Activated CD4-positive, alpha-beta T cell treated with anti-CD3 and anti-CD28 coated beads for 36 hours (primary cell): ENCODE measurements at regions of chr4 and their contacts with region 1.

Region 1: GRCh38 chr4:2008875-2009703 is at the start of gene NELFA:
- DNase-seq: peak; percentile 97
- ATAC-seq: peak; percentile 81
- H3K4me3 Mint-ChIP-seq: peak within 1 kb of the TSS; percentile 87
- H3K27ac Mint-ChIP-seq: peak within 1 kb of the TSS; percentile 90
- H3K4me1 Mint-ChIP-seq: peaks cover 34% of the 10 kb centered on the region
- H3K27me3 Mint-ChIP-seq: no peaks in the 10 kb centered on the region
- total RNA-seq, gene NELFA: 41.6 to 48.3 TPM

Region 2: GRCh38 chr4:1683736-1684505 is 325.2 kb before region 1 on chr4 and contains the start of gene FAM53A:
- CTCF ChIA-PET with region 1: no interaction called
- POLR2A ChIA-PET with region 1: no interaction called
- intact Hi-C with region 1: loop called in 1 of 2 experiments (anchors 1 kb)
- DNase-seq: no peak
- ATAC-seq: peak; percentile 96
- H3K4me3 Mint-ChIP-seq: peak within 1 kb of the TSS; percentile 69
- H3K27ac Mint-ChIP-seq: peak within 1 kb of the TSS; percentile 69
- H3K4me1 Mint-ChIP-seq: peaks cover 12% of the 10 kb centered on the region
- H3K27me3 Mint-ChIP-seq: no peaks in the 10 kb centered on the region
- total RNA-seq, gene FAM53A: 2.0 to 2.5 TPM

Region 3: GRCh38 chr4:1721004-1721665 is 288.0 kb before region 1 on chr4 and contains the starts of genes TACC3 and TMEM129:
- CTCF ChIA-PET with region 1: no interaction called
- POLR2A ChIA-PET with region 1: no interaction called
- intact Hi-C with region 1: loop called in 1 of 2 experiments (anchors 1 kb)
- DNase-seq: peak; percentile 96
- ATAC-seq: peak; percentile 81
- H3K4me3 Mint-ChIP-seq: peak within 1 kb of the TSS; percentile 96
- H3K27ac Mint-ChIP-seq: peak within 1 kb of the TSS; percentile 99
- H3K4me1 Mint-ChIP-seq: peaks cover 52% of the 10 kb centered on the region
- H3K27me3 Mint-ChIP-seq: no peaks in the 10 kb centered on the region
- total RNA-seq, gene TACC3: 197 to 206 TPM
- total RNA-seq, gene TMEM129: 13.7 to 14.6 TPM

Region 4: DNA sequence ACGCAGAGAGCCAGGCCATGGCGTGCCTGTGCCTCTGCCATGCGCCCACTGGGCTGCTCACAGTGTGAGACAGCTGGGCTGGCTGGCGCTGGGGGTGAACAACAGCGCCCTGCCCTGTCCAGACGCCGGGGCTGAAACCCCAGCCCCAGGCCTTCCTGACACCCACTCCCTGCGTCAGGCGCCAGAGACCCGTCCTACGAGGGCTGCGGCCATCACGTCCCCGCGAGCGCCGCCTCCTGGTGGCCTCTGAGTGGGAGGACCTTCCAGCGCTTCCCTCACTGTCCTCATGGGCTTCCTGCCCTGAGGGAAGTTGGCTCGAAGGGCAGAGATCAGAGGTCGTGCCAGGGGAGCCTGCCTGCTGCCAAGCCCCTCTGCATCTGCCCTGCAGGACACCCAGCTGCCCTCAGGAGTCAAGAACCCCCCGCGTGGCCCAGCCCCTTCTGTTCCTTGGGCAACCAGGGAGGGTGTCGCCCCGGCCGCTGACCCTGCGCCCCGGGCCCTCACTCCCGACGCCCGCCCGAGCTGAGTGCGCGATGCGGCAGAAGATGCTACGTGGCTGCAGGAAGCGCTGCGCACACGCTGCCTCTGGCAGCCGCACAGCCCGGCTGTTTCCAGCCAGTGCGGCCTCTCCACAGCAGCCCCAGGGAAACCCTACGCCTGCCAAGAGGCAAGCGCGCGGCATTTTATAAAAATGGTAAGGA is 16.5 kb before region 1 on chr4:
- CTCF ChIA-PET with region 1: no interaction called
- POLR2A ChIA-PET with region 1: interaction called, 12 read pairs
- intact Hi-C with region 1: no loop called
- DNase-seq: no peak
- ATAC-seq: no peak
- H3K4me3 Mint-ChIP-seq: no peak overlapping the region
- H3K27ac Mint-ChIP-seq: no peak overlapping the region
- H3K4me1 Mint-ChIP-seq: peaks cover 3% of the 10 kb centered on the region
- H3K27me3 Mint-ChIP-seq: no peaks in the 10 kb centered on the region

Region 5: DNA sequence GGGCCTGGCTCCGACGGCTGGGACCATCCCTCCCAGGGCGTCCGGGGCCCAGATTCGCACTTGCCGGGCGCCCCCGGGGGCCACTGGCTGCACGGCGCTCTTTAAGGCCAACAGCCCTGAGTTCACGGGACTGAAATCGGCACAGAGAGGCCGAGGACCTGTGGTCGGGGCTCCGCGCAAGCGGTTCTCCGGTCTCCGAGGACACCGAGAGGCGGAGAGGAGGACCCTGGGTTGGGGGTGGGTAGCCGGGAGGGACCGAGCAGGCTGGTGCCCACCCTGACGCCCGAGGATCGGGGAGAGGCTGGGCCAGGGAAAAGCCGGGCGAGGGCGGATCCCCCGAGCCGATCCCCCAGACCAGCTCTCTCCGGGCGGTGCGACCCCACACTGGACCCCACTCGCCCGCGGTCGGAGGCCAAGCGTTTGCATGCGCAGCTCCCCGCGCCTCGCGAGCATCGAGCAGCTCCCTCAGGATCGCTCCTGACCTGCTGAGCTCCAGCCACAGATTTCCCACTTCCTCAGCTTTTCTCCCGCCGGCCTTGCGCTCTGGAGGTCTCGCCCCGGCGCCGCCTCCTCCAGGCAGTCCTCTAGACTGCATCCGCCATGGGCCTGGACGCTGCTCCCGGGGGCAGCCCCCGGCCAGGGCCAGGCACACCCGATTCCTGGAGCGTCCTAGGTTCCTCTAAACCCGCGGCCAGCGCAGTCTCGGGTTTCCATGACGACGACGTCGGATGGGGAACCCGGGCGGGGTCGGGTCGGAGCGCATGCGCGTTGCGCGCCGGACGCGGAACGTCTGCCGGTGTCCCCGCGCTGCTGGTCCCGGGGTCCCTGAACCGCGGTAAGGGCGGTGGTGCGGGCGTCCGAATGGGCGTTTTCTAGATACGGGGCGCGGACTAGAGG is 32.4 kb after region 1 on chr4:
- CTCF ChIA-PET with region 1: interaction called, 3 read pairs
- POLR2A ChIA-PET with region 1: no interaction called
- intact Hi-C with region 1: loop called (anchors 1 kb)
- DNase-seq: peak; percentile 93
- ATAC-seq: peak; percentile 87
- H3K4me3 Mint-ChIP-seq: peak overlapping the region; percentile 70
- H3K27ac Mint-ChIP-seq: no peak overlapping the region
- H3K4me1 Mint-ChIP-seq: no peaks in the 10 kb centered on the region
- H3K27me3 Mint-ChIP-seq: peaks cover 15% of the 10 kb centered on the region

Region 6: DNA sequence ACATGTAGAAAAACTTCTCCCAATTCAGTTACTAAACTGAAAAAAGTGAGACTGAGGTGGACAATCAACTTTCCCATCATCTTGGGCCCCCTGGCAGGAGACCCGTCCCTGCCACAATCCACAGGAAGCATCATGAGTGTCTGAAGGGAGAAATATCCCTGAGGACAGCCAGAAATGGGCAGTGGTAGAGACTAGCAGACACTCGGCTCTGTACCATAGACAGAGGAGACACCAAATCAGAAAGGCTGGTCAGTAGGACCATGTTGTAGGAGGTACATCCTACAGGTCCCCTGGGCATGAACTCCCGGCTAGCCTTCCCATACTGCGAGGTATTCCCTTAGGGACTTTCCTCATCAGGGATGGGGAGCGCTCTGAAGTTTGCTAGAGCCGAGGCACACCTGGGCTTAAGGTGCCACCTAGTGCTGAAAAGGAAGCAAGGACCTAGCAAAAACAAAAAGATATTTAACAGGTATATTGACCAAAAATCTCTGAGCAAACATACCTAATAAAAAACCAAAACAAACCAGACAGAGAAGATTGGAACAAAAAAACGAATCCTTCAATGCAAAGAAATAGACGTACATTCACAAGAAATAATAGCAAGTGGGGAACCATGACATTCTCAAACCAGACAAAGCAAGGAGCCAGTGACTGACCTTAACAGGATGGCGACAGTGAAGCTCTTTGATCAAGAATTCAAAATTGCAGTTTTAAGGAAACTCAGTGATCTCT is 177.2 kb after region 1 on chr4:
- CTCF ChIA-PET with region 1: no interaction called
- POLR2A ChIA-PET with region 1: no interaction called
- intact Hi-C with region 1: loop called in 1 of 2 experiments (anchors 2 kb)
- DNase-seq: no peak
- ATAC-seq: no peak
- H3K4me3 Mint-ChIP-seq: no peak overlapping the region
- H3K27ac Mint-ChIP-seq: no peak overlapping the region
- H3K4me1 Mint-ChIP-seq: no peaks in the 10 kb centered on the region
- H3K27me3 Mint-ChIP-seq: no peaks in the 10 kb centered on the region

Region 7: DNA sequence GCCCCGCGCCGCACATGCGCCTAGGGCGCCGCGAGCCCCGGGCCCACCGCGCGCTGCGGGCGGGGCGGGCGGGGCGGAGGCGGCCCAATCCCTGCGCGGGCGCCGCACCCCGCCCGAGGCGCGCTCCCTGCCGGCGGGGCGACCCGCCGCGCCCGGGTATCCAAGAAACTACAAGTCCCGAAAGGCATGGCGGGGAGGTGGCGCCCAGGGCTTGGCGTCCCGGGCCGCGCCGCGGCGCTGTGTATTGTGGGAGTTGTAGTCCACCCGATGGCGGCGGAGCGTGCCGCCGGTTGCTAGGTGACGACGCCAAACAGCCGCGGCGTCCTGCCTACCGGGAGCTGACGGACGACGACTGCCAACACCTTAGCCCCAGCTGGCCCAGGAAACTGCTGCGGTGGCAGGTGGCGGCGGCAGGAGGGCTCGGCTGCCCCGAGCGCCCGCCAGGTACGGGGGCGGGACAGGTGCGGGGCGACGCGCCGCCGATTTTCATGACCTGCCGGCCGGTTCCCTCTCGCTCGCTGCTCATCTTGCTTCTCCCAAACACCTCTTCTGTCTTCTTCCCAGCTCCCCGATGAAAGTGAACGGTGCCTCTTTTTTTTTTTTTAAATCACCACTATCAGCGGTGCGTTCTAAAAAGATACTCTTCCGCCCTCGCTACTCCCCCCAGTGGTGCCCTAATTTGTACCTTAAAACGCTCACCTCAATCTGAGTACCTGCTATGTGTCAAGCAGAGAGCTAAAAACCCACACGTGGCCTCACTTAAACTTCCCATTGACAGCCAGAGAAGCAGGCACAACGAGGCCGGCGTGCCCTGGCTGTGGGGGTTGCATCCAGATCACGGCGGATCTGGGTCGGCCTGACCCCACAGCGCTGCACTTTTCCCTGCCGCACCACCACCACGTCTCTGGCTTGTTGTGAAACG is 409.8 kb after region 1 on chr4 and contains the start of gene CFAP99:
- CTCF ChIA-PET with region 1: no interaction called
- POLR2A ChIA-PET with region 1: no interaction called
- intact Hi-C with region 1: loop called in 1 of 2 experiments (anchors 1 kb)
- DNase-seq: peak; percentile 99
- ATAC-seq: peak; percentile 93
- H3K4me3 Mint-ChIP-seq: peak within 1 kb of the TSS; percentile 82
- H3K27ac Mint-ChIP-seq: peak within 1 kb of the TSS; percentile 68
- H3K4me1 Mint-ChIP-seq: peaks cover 39% of the 10 kb centered on the region
- H3K27me3 Mint-ChIP-seq: peaks cover 27% of the 10 kb centered on the region
- total RNA-seq, gene CFAP99: 0.05 TPM in 1 of 2 experiments, not detected in the other